Stomach (tissue), 19 donors: ENCODE measurements at regions of chr5 and their contacts with region 1.

Region 1: DNA sequence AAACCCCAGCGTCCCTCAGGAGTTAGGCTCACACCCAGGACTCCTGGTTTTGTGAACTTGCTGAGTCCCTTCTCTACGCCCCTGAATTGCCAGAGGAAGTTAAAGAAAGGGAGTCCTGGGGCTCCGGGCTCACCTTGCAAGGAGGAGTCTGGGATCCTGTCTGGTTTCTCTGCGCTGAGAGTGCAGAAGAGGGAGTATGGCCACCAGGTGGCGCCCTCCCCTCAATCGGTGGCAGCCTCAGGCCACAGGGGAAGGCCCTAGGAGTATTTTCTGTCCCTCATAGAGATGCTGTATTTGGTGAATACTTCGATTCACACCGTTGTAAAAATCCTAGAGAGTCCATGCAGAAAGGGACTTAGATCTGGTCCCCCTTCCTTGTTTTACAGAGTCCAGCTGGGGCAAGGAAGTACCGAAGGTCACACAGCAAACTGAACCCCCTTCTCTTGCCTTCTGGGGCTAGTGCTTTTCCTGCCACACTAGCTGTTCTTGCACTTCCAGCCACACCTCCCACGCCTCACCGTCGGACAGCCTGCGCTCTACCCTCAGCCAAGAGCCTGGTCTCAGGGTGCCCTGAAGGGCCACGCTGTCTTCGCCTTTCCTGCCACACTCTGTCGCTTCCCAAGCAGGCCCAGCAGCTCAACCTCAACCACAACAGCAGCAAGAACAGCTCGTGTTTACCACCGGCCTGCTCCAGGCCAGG is 10.2 kb downstream of the HAND1 start:
- DNase-seq: peak; percentile 80 to 91
- H3K4me3 ChIP-seq: no peak overlapping the region
- H3K27ac ChIP-seq: no peak overlapping the region
- H3K4me1 ChIP-seq: peaks cover 0 to 2% (median under 1%) of the 10 kb centered on the region in 4 donors
- H3K27me3 ChIP-seq: peaks cover 13 to 50% (median 31%) of the 10 kb centered on the region in 3 donors
- CTCF ChIP-seq: peak in 5 of 7 experiments; percentile 59 to 87 (median 87)
- EP300 ChIP-seq: no peak
- POLR2A ChIP-seq: no peak

Region 2: DNA sequence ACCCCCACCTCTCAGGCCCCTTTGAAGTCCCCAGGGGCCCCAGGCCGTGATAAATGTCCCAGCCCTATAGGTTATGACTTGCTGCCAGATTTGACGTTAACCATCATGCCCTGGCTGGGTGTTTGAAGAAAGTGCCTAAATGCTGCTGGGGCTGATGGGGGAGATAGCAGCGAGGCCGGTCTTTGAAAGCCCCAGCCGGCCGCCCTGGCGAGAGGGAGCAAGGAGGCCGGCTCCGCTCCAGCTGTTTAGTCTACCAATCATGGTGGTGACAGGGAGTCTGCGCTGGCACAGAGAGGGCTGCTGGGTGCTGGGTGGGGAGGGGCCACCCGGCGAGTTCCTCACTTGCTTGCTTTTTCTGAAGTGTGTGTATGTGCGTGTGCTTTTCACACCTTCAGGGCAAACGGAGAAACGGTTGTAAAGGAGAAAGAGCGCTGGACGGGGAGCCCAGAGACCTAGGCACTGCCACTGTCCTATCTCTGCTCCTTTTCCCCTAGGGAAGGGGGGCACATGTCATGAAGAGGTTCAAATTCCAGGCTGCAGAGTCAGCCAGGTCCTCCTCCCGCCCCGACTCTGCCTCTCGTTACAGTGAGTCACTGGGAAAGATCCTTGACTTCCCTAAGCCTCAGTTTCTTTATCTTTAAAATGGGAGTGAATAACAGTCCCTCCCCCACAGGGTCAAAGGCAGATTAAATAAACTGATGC is 136.3 kb after region 1 on chr5:
- intact Hi-C with region 1: loop called (anchors 10 kb)
- DNase-seq: peak in 1 of 2 donors; percentile 58
- H3K4me3 ChIP-seq: peak overlapping the region in 1 of 4 donors; percentile 6
- H3K27ac ChIP-seq: no peak overlapping the region
- H3K4me1 ChIP-seq: peaks cover 0 to 10% (median 4%) of the 10 kb centered on the region in 4 donors
- H3K27me3 ChIP-seq: peaks cover 0 to 48% (median 21%) of the 10 kb centered on the region in 3 donors
- CTCF ChIP-seq: no peak
- EP300 ChIP-seq: no peak
- POLR2A ChIP-seq: no peak